Activated T-helper 2 cell treated with anti-CD3 and anti-CD28 coated beads, Interferon-gamma antibody, Interleukin-2, Interleukin-4, amounts not matched to agents 10 μg/mL and 5 μg/mL and 100 μg/mL, durations not matched to agents 14 hours and 24 hours and 36 hours (primary cell): ENCODE measurements at regions of chr2 and their contacts with region 1.

Region 1: GRCh38 chr2:136384531-136385303 is 266.8 kb upstream of the CXCR4 start:
- DNase-seq: peak; percentile 48
- H3K4me3 Mint-ChIP-seq: no peak overlapping the region
- H3K27ac Mint-ChIP-seq: peak overlapping the region; percentile 97
- H3K4me1 Mint-ChIP-seq: peaks cover 47% of the 10 kb centered on the region
- H3K27me3 Mint-ChIP-seq: no peaks in the 10 kb centered on the region

Region 2: DNA sequence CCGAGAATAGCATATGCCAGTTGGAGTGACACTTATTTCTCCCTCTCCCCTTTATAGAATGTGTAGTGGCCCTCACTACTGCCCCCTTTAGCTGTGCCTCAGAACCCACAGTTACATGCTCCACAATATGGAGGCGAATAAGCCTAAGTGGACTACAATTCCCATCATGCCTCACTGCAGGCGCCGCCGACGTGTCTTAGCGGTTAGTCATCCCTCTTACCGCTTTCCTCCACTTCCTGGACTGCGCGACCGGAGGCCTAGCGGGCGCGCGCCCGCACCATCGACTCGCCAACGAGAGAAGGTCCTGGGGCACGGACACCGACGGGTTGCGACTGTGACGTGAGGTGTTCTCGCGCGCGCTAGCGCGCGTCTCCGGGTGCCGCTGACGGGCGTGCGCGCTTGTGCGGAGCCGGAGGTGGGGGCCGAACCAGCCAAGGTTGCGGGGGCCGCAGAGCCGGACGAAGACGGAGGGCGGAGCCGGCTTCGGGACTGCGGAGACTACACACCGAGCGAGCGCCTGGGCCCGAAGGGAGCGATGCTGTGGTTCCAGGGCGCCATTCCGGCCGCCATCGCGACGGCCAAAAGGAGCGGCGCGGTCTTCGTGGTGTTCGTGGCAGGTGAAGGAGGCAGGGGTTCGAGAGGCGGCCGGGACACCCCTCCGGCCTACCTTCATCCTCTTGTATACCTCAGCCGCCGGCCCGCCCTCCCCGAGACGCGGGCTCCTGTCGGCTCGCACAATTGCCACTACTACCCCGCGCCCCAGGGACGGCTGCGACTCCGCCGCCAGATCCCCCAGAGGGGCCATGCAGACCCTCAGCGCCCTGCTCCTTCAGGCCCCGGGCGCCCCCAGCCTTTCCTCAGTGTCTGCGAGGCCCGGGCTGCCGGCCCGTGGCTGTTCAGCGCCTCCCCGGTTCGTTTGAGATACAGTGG is 643.1 kb before region 1 on chr2 and contains the start of gene UBXN4:
- intact Hi-C with region 1: loop called (anchors 2 kb)
- DNase-seq: peak; percentile 90
- H3K4me3 Mint-ChIP-seq: peak within 1 kb of the TSS; percentile 98
- H3K27ac Mint-ChIP-seq: peak within 1 kb of the TSS; percentile 100
- H3K4me1 Mint-ChIP-seq: peaks cover 34% of the 10 kb centered on the region
- H3K27me3 Mint-ChIP-seq: no peaks in the 10 kb centered on the region
- total RNA-seq, gene UBXN4: 118 and 138 TPM in 2 replicates

Region 3: GRCh38 chr2:135913727-135914365 is 470.9 kb before region 1 on chr2:
- intact Hi-C with region 1: loop called (anchors 1 kb)
- DNase-seq: no peak
- H3K4me3 Mint-ChIP-seq: no peak overlapping the region
- H3K27ac Mint-ChIP-seq: peak overlapping the region; percentile 76
- H3K4me1 Mint-ChIP-seq: peaks cover 14% of the 10 kb centered on the region
- H3K27me3 Mint-ChIP-seq: no peaks in the 10 kb centered on the region

Region 4: GRCh38 chr2:135985018-135985825 is 399.5 kb before region 1 on chr2 and contains the start of gene DARS1:
- intact Hi-C with region 1: loop called (anchors 1 kb)
- DNase-seq: peak; percentile 80
- H3K4me3 Mint-ChIP-seq: peak within 1 kb of the TSS; percentile 94
- H3K27ac Mint-ChIP-seq: peak within 1 kb of the TSS; percentile 98
- H3K4me1 Mint-ChIP-seq: peaks cover 41% of the 10 kb centered on the region
- H3K27me3 Mint-ChIP-seq: no peaks in the 10 kb centered on the region
- total RNA-seq, gene DARS1: 179 and 183 TPM in 2 replicates

Region 5: GRCh38 chr2:136135921-136136906 is 248.5 kb before region 1 on chr2:
- intact Hi-C with region 1: loop called (anchors 1 kb)
- DNase-seq: peak; percentile 47
- H3K4me3 Mint-ChIP-seq: peak overlapping the region; percentile 13
- H3K27ac Mint-ChIP-seq: no peak overlapping the region
- H3K4me1 Mint-ChIP-seq: peaks cover 74% of the 10 kb centered on the region
- H3K27me3 Mint-ChIP-seq: peaks cover 33% of the 10 kb centered on the region

Region 6: GRCh38 chr2:136310005-136310495 is 74.7 kb before region 1 on chr2:
- intact Hi-C with region 1: loop called (anchors 2 kb)
- DNase-seq: no peak
- H3K4me3 Mint-ChIP-seq: peak overlapping the region; percentile 41
- H3K27ac Mint-ChIP-seq: peak overlapping the region; percentile 94
- H3K4me1 Mint-ChIP-seq: peaks cover 47% of the 10 kb centered on the region
- H3K27me3 Mint-ChIP-seq: no peaks in the 10 kb centered on the region

Region 7: GRCh38 chr2:136750065-136750464 is 365.3 kb after region 1 on chr2:
- intact Hi-C with region 1: no loop called
- DNase-seq: no peak
- H3K4me3 Mint-ChIP-seq: no peak overlapping the region
- H3K27ac Mint-ChIP-seq: no peak overlapping the region
- H3K4me1 Mint-ChIP-seq: peaks cover 5% of the 10 kb centered on the region
- H3K27me3 Mint-ChIP-seq: no peaks in the 10 kb centered on the region